Activated CD4-positive, alpha-beta T cell treated with anti-CD3 and anti-CD28 coated beads, Interleukin-2, amount 10 ng/mL, durations not matched to agents 7 days and 5 days (primary cell): ENCODE measurements at regions of chr5 and their contacts with region 1.

Region 1: DNA sequence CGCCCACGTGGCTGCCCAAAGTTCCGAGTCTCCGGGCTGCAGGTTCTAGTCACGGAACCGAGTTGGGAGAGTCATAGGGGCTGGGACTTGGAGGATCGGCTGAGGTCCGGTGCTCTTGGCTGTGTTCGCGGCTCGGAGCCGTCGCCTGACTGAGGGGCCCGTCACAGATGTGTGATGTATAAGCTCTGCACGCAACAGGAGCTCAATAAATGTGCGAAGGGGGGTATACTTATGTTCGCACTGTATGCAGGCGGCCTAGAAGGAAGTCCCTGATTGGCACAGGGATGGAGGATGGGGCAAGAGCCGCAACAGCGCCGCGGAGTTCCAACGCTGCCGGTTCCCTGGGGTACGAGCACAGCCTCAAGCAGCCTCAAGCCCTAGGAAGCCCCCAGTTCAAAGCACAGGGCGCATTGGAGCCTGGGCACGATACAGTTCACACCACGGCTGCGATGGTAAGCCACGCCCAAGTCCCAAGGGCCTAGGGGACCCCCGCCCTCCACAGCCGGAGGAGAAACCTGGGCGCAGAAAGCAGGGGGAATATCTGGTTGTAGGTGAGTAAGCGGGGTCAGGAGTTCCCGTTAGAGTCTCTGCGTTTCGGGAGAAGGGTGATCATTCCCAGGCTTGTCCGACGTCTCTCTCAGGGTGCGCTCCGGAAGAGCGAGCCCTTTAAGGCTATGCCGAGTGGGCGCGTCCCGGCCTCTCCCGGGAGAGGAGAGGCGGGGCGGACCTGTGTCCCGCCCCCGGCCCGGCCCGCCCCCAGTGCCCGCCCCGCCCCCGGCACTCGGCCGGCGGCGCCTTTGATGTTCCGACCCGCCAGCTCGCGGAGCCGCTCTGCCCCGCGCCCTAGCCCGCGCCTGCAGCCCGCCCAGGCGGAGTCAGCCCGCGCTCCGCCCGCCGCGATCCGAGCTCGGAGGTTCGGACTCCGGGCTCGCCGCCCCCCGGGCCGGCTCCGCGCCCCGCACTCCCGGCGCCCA is at the start of gene TCF7:
- DNase-seq: peak; percentile 77
- H3K4me3 Mint-ChIP-seq: peak within 1 kb of the TSS; percentile 82
- H3K27ac Mint-ChIP-seq: peak within 1 kb of the TSS; percentile 95
- H3K4me1 Mint-ChIP-seq: peaks cover 66% of the 10 kb centered on the region
- H3K27me3 Mint-ChIP-seq: peaks cover 8% of the 10 kb centered on the region
- total RNA-seq, gene TCF7: 271 to 283 TPM

Region 2: GRCh38 chr5:134075102-134075501 is 39.1 kb before region 1 on chr5:
- CTCF ChIA-PET with region 1: no interaction called
- POLR2A ChIA-PET with region 1: no interaction called
- DNase-seq: no peak
- H3K4me3 Mint-ChIP-seq: no peak overlapping the region
- H3K27ac Mint-ChIP-seq: no peak overlapping the region
- H3K4me1 Mint-ChIP-seq: peaks cover 73% of the 10 kb centered on the region
- H3K27me3 Mint-ChIP-seq: no peaks in the 10 kb centered on the region

Region 3: DNA sequence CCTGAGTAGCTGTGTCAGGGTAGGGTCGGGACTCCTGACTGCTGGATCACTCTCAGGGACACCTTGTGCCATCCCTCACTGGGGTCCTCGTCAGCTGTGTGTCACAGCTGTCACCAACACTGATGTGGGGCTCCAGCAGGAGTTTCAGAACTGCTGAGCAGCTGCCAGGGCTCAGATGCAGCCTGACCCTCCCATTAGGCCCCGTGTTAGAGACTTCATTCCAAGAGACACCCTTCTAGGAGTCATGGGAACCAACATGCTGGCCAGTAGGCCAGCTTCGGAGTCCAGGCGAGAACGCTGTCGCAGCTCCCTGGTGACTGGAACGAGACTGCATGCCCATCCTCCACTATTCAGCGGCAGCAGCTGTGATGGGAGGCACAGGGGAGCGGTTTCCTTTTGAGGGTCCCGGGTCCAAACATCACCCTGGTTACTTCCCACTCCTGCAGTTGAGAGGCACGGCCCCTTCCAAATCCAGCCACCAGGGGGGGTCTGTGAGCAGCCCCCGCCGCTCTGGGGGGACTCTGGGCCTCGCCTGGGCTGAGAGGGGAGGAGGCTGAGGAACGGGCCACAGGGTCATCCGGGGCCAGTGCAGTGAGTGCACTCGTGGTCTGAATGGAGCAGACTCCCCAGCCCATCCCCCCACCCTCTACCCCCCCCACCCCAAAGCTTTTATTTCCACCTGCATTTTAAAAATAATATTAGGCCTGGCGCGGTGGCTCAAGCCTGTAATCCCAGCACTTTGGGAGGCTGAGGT is 12.3 kb before region 1 on chr5:
- CTCF ChIA-PET with region 1: interaction called, 40 read pairs
- POLR2A ChIA-PET with region 1: interaction called, 4 read pairs
- DNase-seq: peak; percentile 67
- H3K4me3 Mint-ChIP-seq: no peak overlapping the region
- H3K27ac Mint-ChIP-seq: peak overlapping the region; percentile 46
- H3K4me1 Mint-ChIP-seq: peaks cover 90% of the 10 kb centered on the region
- H3K27me3 Mint-ChIP-seq: peaks cover 1% of the 10 kb centered on the region

Region 4: DNA sequence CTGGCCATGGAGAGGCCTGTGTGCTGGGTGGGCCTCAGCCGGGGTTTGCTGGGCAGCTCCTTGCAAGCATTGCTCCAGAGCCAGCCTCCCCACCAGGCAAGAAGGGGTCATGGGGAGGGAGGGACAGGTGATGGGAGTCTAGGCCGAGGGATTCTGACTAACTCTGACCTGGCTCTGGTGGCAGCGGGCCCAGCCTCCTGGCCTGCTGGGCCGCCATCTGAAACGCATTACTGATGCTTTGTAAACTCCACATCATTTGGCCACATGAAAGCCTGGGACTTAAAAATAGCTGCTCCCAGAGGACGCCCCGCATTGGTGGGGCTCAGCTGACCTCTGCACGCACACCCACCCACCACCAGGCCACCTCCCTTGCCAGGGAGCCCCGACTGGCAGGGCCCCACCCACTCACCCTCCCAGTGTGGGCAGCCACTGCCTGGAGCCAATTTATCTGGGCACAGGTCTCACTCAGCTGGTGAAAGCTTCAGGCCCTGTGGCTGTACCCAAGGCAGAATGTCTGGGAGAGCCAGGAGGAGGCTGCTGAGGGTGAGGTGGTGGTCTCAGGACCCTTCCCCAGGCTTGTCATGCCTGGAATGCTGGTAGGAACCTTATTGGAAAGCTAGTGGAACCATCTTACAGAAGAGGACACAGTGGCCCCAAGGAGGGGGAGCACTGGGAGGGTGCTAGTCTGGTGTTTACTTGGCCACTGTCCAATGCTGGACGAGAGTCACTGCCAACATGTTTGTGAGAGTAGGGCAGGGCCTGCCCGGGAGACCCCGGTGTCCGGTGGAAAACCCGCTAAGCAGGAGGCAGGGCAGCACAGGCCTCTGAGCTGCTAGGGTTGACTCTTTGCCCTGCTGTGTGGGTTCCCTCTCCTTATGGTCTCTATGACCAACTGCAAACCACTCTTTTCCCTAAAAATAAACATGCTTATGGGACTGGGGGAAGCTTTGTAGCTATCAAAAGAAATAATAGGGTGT is 11.1 kb after region 1 on chr5:
- CTCF ChIA-PET with region 1: interaction called, 11 read pairs
- POLR2A ChIA-PET with region 1: interaction called, 6 read pairs
- DNase-seq: no peak
- H3K4me3 Mint-ChIP-seq: peak overlapping the region; percentile 79
- H3K27ac Mint-ChIP-seq: peak overlapping the region; percentile 94
- H3K4me1 Mint-ChIP-seq: peaks cover 98% of the 10 kb centered on the region
- H3K27me3 Mint-ChIP-seq: peaks cover 1% of the 10 kb centered on the region

Region 5: DNA sequence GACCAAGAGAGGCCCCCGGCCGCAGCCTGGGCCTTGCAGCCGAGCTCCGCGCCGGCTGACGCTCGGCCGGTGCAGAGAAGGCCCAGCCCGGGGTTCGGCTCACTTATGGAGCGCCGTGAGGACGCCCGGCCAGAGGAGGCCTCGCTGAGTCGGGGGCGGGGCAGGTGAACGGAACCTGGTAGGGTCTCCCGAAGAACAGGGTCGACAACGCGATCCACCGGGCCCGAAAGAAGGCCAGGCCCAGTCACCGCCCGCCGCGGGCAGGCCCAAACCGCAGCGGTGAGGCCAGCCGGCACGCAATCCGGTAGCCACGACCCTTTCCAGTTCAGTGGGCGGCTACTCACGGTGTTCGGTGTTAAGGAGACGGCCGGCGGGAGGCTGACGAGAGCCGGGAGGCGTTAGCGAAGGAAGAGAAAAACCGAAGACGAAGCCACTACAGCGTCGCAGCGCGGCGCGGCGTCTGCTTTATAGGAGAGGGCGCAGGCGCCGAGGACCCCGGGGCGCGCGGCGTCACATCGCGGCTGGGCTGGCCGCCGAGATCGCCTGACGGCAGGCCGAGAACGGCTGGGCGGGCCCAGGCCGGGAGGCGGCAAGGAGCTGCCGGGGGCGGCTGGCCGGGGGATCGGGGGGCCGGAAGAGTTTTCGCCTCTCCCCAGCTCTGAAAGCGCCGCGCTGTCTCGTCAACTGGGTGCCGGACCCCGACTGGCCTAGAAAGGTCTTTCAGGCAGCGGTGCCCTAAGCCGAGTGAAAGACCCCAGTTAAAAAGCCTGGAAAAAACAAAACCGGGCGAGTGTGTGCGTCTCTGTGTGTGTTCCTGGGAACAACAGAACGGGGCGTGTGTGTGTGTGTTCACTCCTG is 62.6 kb after region 1 on chr5 and contains the start of gene SKP1:
- CTCF ChIA-PET with region 1: no interaction called
- POLR2A ChIA-PET with region 1: no interaction called
- DNase-seq: peak; percentile 84
- H3K4me3 Mint-ChIP-seq: peak within 1 kb of the TSS; percentile 97
- H3K27ac Mint-ChIP-seq: peak within 1 kb of the TSS; percentile 99
- H3K4me1 Mint-ChIP-seq: peaks cover 30% of the 10 kb centered on the region
- H3K27me3 Mint-ChIP-seq: no peaks in the 10 kb centered on the region
- total RNA-seq, gene SKP1: 194 to 197 TPM